WTC11 (cell line): ENCODE measurements at regions of chr20 and their contacts with region 1.

Region 1: GRCh38 chr20:47620808-47621805 is 119.4 kb downstream of the NCOA3 start:
- DNase-seq: no peak
- ATAC-seq: no peak
- H3K4me3 Mint-ChIP-seq: no peak overlapping the region
- H3K27ac Mint-ChIP-seq: no peak overlapping the region
- H3K4me1 Mint-ChIP-seq: peaks cover 12% of the 10 kb centered on the region
- H3K27me3 Mint-ChIP-seq: no peaks in the 10 kb centered on the region
- CTCF ChIP-seq: peak; percentile 48; the same call in 1 of the 2 replicates

Region 2: GRCh38 chr20:47205577-47206498 is 415.3 kb before region 1 on chr20:
- CTCF ChIA-PET with region 1: interaction called, 11 read pairs
- POLR2A ChIA-PET with region 1: no interaction called
- DNase-seq: peak; percentile 78
- ATAC-seq: peak; percentile 74
- H3K4me3 Mint-ChIP-seq: no peak overlapping the region
- H3K27ac Mint-ChIP-seq: peak overlapping the region; percentile 6
- H3K4me1 Mint-ChIP-seq: peaks cover 21% of the 10 kb centered on the region
- H3K27me3 Mint-ChIP-seq: no peaks in the 10 kb centered on the region
- CTCF ChIP-seq: peak; percentile 83

Region 3: DNA sequence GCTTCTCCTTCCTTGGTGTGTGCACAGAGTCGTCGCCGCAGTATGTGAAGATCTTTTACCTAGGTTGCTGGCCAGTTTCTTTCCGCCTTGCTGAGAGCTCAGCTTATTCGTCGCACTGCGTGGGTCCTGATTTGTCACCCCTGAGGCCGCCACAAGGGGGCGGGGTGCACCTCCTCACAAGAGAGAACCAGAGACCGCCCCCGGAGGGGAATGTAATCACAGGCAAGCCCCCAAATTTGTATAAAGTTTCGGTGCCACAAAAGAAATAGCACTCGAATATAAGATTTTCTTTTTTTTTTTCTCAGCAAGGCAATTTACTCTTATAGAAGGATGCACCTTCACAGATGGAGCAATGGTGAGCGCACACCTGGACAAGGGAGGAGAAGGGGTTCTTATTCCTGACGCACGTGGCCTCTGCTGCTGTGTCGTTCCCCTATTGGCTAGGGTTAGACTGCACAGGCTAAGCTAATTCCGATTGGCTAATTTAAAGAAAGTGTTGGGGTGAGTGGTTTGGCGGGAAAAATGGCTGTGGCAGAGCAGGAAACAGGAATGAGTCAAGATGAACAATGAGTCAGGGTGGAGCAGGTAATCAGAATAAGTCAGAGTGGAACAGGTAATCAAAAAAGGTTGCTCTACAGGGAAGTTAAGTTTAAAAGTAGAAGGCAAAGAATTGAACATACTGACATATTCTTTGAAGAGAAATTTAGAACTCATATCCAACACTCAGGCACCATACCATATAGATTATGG is 99.9 kb before region 1 on chr20:
- CTCF ChIA-PET with region 1: interaction called, 10 read pairs
- POLR2A ChIA-PET with region 1: no interaction called
- DNase-seq: peak; percentile 72
- ATAC-seq: peak; percentile 39
- H3K4me3 Mint-ChIP-seq: no peak overlapping the region
- H3K27ac Mint-ChIP-seq: peak overlapping the region; percentile 64; the same call in 1 of the 2 replicates
- H3K4me1 Mint-ChIP-seq: peaks cover 20% of the 10 kb centered on the region
- H3K27me3 Mint-ChIP-seq: no peaks in the 10 kb centered on the region; the same call in 1 of the 2 replicates
- CTCF ChIP-seq: peak; percentile 65

Region 4: DNA sequence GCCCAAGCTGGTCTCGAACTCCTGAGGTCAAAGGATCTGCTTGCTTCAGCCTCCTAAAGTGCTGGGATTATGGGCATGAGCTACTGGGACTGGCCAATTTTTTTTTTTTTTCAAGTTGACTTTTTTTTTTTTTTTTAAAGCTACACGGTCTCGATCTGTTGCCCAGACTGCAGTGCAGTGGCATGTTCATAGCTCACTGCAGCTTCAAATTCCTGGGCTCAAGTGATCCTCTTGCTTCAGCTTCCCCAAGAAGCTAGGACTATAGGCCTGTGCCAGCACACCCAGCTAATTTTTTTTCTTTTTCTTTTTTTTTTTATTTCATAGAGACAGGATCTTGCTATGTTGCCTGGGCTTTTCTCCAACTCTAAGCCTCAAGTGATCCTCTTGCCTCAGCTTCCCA is 59.9 kb before region 1 on chr20:
- CTCF ChIA-PET with region 1: no interaction called
- POLR2A ChIA-PET with region 1: interaction called, 10 read pairs
- DNase-seq: no peak
- ATAC-seq: no peak
- H3K4me3 Mint-ChIP-seq: no peak overlapping the region
- H3K27ac Mint-ChIP-seq: no peak overlapping the region
- H3K4me1 Mint-ChIP-seq: peaks cover 68% of the 10 kb centered on the region
- H3K27me3 Mint-ChIP-seq: no peaks in the 10 kb centered on the region
- CTCF ChIP-seq: no peak

Region 5: GRCh38 chr20:47571426-47571825 is 49.7 kb before region 1 on chr20:
- CTCF ChIA-PET with region 1: no interaction called
- POLR2A ChIA-PET with region 1: no interaction called
- DNase-seq: no peak
- ATAC-seq: no peak
- H3K4me3 Mint-ChIP-seq: no peak overlapping the region
- H3K27ac Mint-ChIP-seq: no peak overlapping the region
- H3K4me1 Mint-ChIP-seq: peaks cover 37% of the 10 kb centered on the region
- H3K27me3 Mint-ChIP-seq: no peaks in the 10 kb centered on the region
- CTCF ChIP-seq: no peak